Endothelial cell of umbilical vein (primary cell): ENCODE measurements at regions of chr22 and their contacts with region 1.

Region 1: DNA sequence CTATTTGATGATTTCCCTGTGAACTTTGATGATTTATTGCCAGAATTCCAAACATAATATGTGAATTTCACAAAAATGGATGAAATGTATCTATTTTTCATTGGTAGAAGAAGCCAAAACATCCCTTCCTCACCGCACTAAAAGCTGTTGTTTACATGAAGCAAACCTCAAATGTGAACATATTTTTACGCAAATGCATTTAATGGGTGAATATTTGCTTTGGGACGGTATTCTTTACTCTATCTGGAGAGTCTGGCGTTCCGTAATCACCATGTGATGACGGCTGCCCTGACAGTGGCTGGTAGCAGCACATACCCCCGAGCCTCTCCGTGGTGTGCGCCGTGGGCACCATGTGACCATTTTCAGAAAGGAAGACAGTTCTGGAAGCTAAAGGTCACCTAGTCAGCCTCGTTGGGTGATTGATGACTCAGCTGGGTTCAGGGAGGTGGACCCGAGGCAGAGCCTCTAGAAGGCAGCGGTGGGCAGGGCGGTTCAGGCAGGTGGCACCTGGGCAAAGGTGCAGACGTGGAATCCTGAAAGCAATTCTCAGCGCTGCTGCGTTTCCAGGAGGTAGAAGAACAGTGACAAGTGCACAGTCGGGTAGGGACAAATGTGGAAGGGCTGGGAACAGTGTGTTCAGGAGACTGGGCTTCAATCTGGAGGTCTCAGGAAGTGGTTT is 45.3 kb downstream of the PPARA start:
- DNase-seq: no peak
- H3K4me3 ChIP-seq: no peak overlapping the region
- H3K27ac ChIP-seq: no peak overlapping the region
- H3K4me1 ChIP-seq: no peaks in the 10 kb centered on the region
- H3K27me3 ChIP-seq: no peaks in the 10 kb centered on the region
- CTCF ChIP-seq: no peak
- POLR2A ChIP-seq: no peak

Region 2: GRCh38 chr22:46150034-46150654 is 45.5 kb before region 1 on chr22 and contains the start of gene PPARA:
- CTCF ChIA-PET with region 1: no interaction called
- POLR2A ChIA-PET with region 1: interaction called, 10 read pairs
- dilution Hi-C with region 1: no loop called
- intact Hi-C with region 1: no loop called
- DNase-seq: peak; percentile 40
- H3K4me3 ChIP-seq: peak within 1 kb of the TSS; percentile 46 to 92 (median 73)
- H3K27ac ChIP-seq: no peak within 1 kb of the TSS
- H3K4me1 ChIP-seq: peaks cover 11% of the 10 kb centered on the region
- H3K27me3 ChIP-seq: peaks cover 8 to 25% of the 10 kb centered on the region in 2 experiments
- CTCF ChIP-seq: no peak
- POLR2A ChIP-seq: no peak
- total RNA-seq, gene PPARA: 6.6 and 10.7 TPM in 2 replicates

Region 3: DNA sequence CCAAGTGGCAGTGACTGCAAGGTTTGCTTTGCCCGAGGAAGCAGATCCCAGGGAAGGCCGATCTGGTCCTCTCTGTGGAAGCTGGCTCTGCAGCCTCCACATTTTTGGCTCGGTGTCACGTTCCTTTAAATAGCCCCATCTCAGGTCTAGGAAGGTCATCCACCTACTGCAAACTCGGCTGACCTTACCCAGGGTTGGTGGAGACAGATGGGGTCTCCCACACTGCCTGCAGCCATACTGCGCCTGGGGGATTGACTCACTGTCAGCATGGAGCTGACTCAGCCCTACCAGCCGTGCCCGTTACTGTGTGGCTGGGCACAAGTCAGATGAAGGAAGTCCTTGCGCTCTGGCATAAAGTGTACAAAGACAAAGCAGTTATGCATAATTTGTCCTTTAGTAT is 37.6 kb after region 1 on chr22:
- CTCF ChIA-PET with region 1: no interaction called
- POLR2A ChIA-PET with region 1: no interaction called
- dilution Hi-C with region 1: no loop called
- intact Hi-C with region 1: no loop called
- DNase-seq: peak; percentile 21
- H3K4me3 ChIP-seq: no peak overlapping the region
- H3K27ac ChIP-seq: no peak overlapping the region
- H3K4me1 ChIP-seq: no peaks in the 10 kb centered on the region
- H3K27me3 ChIP-seq: no peaks in the 10 kb centered on the region
- CTCF ChIP-seq: no peak
- POLR2A ChIP-seq: no peak